Left cardiac atrium (tissue), 4 donors: ENCODE measurements at regions of chr20 and their contacts with region 1.

Region 1: GRCh38 chr20:56202493-56203077 is 45.9 kb upstream of the MC3R start:
- DNase-seq: no peak
- ATAC-seq: peak in 1 of 2 donors; percentile 24

Region 2: GRCh38 chr20:56259948-56260347 is 57.4 kb after region 1 on chr20:
- intact Hi-C with region 1: no loop called
- DNase-seq: no peak
- ATAC-seq: peak in 1 of 2 donors; percentile 38

Region 3: GRCh38 chr20:56343861-56344381 is 141.3 kb after region 1 on chr20:
- intact Hi-C with region 1: loop called in 1 of 2 experiments (anchors 10 kb)
- DNase-seq: peak; percentile 42
- ATAC-seq: peak; percentile 55 to 83